GM12878 (cell line): ENCODE measurements at regions of chr14 and their contacts with region 1.

Region 1: DNA sequence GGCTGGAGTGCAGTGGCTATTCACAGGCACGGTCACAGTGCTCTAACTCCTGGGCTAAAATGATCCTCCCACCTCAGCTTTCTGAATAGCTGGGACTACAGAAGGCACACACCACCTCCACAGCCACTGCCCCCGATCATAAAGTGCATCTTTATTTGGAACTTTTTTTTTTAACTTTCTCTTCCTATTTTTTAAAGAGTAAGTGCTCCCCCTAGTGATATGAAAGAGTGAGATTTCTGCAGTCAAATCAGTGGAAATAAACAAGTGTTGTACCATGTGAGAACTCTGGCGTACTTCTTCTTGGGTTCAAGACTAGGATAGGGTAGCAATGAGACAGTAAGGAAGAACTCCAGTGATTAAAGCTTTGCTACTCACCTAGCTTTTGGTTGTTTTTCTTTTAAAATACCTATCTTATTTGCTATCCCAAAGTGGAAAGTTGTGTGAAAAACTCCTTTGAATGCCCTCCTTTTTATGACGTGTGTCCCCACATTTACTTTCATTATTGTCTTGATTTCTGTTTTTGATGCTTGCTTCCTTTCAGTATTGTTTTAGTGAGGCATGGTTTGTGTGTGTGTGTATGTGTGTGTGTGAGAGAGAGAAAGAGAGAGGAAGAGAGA is 6.6 kb downstream of the PPP4R4 start:
- DNase-seq: peak; percentile 20
- ATAC-seq: peak; percentile 92
- H3K4me3 ChIP-seq: peak overlapping the region; percentile 31; the same call in 1 of the 2 replicates
- H3K27ac ChIP-seq: no peak overlapping the region
- H3K4me1 ChIP-seq: no peaks in the 10 kb centered on the region
- H3K27me3 ChIP-seq: peaks cover 0 to 11% of the 10 kb centered on the region in 2 experiments; a peak in 2 of 4 replicates
- CTCF ChIP-seq: peak; percentile 44 to 60 (median 53); a peak in 5 of 6 replicates
- EP300 ChIP-seq: no peak
- POLR2A ChIP-seq: no peak
- RAD21 ChIP-seq: peak; percentile 64

Region 2: DNA sequence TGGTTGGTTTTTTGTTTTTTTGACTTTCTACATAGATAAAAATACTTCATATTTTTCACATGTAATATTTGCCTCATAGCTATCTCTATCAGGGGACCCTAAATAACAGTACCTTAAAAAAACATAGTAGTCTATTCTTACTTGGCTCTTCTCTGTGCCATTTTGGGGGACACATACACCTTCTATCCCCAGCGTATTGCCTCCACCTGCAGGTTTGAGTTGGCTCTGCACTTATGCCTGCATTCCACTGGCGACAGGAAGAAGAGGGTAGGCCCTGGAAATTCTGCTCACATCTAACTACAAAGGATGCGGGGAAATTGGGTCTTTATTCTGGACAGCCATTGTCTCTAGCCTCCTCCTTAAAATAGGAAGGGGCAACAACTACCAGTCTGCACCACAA is 37.5 kb before region 1 on chr14:
- CTCF ChIA-PET with region 1: interaction called, 58 read pairs
- POLR2A ChIA-PET with region 1: no interaction called
- RAD21 ChIA-PET with region 1: no interaction called
- SMC1A ChIA-PET with region 1: interaction called, 7 read pairs
- in situ Hi-C with region 1: no loop called
- intact Hi-C with region 1: no loop called
- DNase-seq: no peak
- ATAC-seq: peak; percentile 83
- H3K4me3 ChIP-seq: no peak overlapping the region
- H3K27ac ChIP-seq: no peak overlapping the region
- H3K4me1 ChIP-seq: peaks cover 5% of the 10 kb centered on the region
- H3K27me3 ChIP-seq: no peaks in the 10 kb centered on the region
- CTCF ChIP-seq: peak; percentile 37 to 49 (median 41); a peak in 5 of 6 replicates
- EP300 ChIP-seq: no peak
- POLR2A ChIP-seq: no peak
- RAD21 ChIP-seq: peak; percentile 33

Region 3: DNA sequence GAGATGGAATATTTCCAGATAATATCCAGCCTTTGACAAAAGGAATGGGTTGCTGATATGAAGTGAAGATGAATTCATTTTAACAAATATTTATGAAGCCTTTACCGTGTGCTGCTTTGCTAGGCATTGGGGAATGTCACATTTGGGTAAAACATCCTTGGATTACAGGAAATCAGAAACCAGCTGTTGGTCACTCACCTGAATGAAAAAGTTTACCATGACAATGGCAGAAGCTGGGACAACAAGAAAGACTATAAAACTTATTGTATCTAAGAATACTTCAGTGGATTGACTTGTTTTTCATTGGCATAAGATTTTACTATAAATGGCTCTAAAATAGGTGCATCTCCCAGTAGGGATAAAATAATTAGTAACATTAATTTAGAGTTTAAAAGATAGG is 13.0 kb after region 1 on chr14:
- CTCF ChIA-PET with region 1: interaction called, 15 read pairs
- POLR2A ChIA-PET with region 1: no interaction called
- RAD21 ChIA-PET with region 1: no interaction called
- SMC1A ChIA-PET with region 1: interaction called, 4 read pairs
- in situ Hi-C with region 1: no loop called
- intact Hi-C with region 1: no loop called
- DNase-seq: no peak
- ATAC-seq: no peak
- H3K4me3 ChIP-seq: no peak overlapping the region
- H3K27ac ChIP-seq: no peak overlapping the region
- H3K4me1 ChIP-seq: no peaks in the 10 kb centered on the region
- H3K27me3 ChIP-seq: no peaks in the 10 kb centered on the region
- CTCF ChIP-seq: no peak
- EP300 ChIP-seq: no peak
- POLR2A ChIP-seq: no peak
- RAD21 ChIP-seq: no peak

Region 4: DNA sequence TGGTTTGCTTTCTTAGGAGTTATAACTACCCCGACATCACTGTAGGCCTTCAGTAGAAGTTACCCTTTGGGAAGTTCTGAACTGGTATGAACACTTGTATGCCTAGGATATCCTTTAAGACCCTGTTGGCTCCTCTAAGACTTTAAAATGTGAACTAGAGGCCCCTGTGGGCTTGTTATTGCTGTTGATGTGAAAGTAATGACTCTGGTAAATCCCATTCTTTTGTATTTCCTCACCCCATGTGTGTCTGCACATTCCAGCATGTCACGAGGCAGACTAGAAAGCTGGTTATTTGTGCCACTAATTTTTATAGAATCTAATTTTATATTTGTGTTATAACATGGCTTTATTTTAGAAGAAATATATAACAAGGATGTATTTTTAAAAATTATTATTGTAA is 63.4 kb after region 1 on chr14:
- CTCF ChIA-PET with region 1: no interaction called
- POLR2A ChIA-PET with region 1: no interaction called
- RAD21 ChIA-PET with region 1: no interaction called
- SMC1A ChIA-PET with region 1: no interaction called
- in situ Hi-C with region 1: no loop called
- intact Hi-C with region 1: no loop called
- DNase-seq: no peak
- ATAC-seq: no peak
- H3K4me3 ChIP-seq: no peak overlapping the region
- H3K27ac ChIP-seq: no peak overlapping the region
- H3K4me1 ChIP-seq: no peaks in the 10 kb centered on the region
- H3K27me3 ChIP-seq: no peaks in the 10 kb centered on the region
- CTCF ChIP-seq: no peak
- EP300 ChIP-seq: no peak
- POLR2A ChIP-seq: no peak
- RAD21 ChIP-seq: no peak